WTC11 (cell line): ENCODE measurements at regions of chr17 and their contacts with region 1.

Region 1: DNA sequence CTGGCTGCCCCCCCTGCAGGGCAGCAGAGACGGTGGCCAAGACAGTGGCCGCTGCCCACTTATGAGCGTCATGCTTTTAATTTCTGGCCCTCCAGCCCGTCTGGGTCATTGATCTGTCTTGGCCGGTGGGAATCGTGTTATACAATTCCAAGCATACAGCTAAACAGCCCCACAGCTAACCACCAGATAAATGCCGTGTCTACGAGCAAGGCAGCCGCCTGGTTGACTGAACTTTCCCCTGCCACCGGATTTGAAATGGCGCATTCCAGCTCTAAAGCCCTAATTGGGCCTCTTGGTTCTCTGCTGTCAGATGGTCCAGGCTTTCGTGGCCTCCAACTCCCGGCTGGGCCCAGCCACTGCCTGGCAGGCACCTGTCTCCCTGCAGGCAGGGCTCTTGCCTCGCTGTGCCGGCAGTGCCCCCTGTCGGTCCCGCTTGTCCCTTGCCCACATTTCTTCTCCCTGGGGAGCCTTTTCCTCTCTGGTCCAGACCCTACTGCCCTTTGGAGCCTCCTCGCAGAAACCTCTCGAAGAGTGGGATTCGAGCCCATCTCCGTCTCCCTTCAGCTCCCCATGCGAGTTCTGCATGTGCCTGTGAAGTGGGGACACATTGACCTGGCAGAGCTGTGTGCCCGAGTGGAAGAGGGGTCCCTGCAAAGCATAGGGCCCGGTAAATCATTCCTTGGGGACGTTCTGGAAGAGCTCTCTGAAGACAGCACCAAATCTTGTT is 1.8 kb upstream of the RBFOX3 start:
- DNase-seq: peak; percentile 93
- ATAC-seq: peak; percentile 40
- H3K4me3 Mint-ChIP-seq: no peak overlapping the region
- H3K27ac Mint-ChIP-seq: no peak overlapping the region
- H3K4me1 Mint-ChIP-seq: peaks cover 12% of the 10 kb centered on the region
- H3K27me3 Mint-ChIP-seq: peaks cover 61% of the 10 kb centered on the region
- CTCF ChIP-seq: peak; percentile 80

Region 2: DNA sequence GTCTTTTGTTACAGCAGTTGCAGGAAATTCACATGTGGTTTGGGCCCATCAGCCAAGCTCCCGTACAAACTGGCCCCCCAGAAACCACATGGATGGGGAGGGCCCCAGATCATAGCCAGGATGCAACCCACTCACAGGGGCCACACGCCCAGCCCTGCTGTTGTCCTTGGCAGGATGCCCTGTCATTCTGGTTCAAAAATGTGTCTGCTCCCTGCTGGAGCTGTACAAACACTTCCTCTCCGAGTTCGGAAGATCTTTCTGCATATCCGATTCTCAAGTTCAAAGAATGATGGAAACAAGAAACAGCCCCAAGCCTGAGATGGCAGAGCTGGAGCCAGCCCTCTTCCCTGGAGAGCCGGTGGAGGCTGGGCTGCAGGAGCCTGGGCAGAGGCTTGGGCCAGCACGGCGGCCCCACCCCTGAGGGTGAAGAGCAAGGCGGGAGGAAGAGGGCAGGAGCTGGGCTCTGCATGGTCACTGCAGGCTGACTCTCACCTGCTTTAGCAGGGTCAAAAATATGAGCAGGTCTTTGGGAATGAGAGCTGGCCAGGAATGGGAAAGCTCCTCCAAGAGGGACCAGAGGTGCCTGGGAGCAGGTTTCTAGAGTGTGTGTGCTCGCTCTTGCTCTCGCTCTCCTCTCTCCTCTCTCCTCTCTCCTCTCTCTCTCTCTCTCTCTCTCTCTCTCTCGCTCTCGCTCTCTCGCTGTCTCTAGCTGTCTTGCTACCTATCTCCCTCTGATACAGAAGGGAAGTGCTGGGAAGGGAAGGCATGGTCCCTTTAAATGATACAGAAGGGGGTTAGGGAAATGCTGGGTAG is 83.4 kb after region 1 on chr17:
- CTCF ChIA-PET with region 1: interaction called, 12 read pairs
- POLR2A ChIA-PET with region 1: no interaction called
- DNase-seq: no peak
- ATAC-seq: no peak
- H3K4me3 Mint-ChIP-seq: no peak overlapping the region
- H3K27ac Mint-ChIP-seq: no peak overlapping the region
- H3K4me1 Mint-ChIP-seq: peaks cover 55% of the 10 kb centered on the region
- H3K27me3 Mint-ChIP-seq: no peaks in the 10 kb centered on the region
- CTCF ChIP-seq: no peak